ENCODE measurements at regions of chr14 and their contacts with region 1.

Region 1: DNA sequence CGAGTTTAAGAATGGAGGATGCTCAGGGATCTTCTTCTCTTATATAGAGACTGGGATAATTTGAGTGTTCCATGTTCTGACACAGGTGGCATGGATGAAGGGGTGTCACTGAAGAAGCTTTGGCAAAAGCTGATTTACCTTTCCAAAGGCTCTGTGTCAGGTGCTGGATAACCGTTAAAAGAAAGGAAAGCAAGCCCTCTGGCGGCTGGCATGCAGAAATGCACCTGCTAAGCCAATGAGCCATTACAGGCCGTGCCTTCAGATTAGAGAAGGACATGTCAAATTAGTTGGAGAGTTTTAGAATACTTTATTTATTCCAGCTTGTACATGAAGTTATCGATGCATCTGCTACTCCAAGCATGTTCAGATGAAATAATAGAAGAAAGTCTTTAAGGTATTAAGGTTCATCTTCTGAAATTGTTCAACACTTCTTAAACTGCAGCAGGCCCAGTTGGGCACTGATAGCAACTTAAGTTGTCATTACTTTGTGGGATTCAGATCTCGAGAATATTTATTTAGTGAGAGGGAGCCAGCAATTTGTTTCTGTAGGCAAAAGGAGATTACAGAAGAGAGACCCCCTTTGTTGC is 678.2 kb downstream of the NRXN3 start:
- DNase-seq: peak in 7 of 10 donors; percentile 10 to 54 (median 30)
- H3K4me3 ChIP-seq: no peak overlapping the region
- H3K27ac ChIP-seq: peak overlapping the region in 40 of 59 donors; percentile 8 to 78 (median 55)
- H3K27me3 ChIP-seq: no peaks in the 10 kb centered on the region
- CTCF ChIP-seq: peak; percentile 67 to 92 (median 82)

Region 2: DNA sequence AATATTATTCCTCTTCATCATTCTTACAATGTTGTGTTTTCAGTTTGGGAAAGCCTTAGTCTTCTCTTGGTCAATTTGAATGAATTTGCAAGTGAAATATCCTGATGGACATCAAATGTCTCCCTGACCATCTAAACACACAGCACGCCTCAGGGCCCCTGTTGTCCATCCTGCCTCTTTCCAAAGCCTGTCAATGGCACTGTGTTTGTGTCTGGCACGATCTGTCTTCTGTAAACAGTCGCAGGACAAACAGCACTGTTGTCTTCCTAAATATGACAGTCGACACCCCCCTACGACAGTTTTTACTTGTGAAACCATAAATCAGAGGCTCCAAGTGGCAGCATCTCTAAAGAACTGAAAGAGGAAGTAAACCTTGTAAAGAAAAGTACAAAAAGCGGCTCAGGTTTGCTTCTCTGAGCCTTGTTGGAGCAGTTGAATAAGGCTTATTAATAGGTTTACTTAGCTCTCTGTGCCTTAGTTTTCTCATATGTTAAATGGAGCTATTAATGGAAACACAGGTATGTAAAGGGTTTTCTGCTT is 392.4 kb before region 1 on chr14:
- intact Hi-C with region 1: no loop called
- DNase-seq: peak in 4 of 10 donors; percentile 40 to 54 (median 46)
- H3K4me3 ChIP-seq: peak overlapping the region in 7 of 59 donors; percentile 4 to 31 (median 11)
- H3K27ac ChIP-seq: peak overlapping the region in 52 of 59 donors; percentile 3 to 86 (median 64)
- H3K27me3 ChIP-seq: no peaks in the 10 kb centered on the region
- CTCF ChIP-seq: no peak

Region 3: DNA sequence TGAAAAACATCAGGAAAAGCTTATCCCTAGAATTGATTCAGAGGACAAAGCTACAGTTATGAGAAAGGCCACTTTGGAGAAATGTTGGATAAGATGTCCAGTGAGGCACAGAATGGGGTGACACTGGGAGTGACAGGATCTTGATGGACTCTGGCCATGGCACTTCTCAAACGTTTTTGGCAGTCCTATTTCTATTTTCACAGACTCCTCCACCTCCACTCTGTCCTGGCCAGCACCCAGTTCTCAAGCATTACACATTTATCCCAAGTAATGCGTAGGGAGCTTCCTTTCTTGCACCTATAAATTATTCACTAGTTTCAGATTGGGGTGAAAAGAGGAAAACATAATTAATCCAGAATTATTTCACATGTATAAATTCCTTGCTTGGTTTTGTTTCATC is 49.1 kb after region 1 on chr14:
- intact Hi-C with region 1: loop called in 1 of 2 experiments (anchors 5 kb)
- DNase-seq: peak in 1 of 10 donors; percentile 36
- H3K4me3 ChIP-seq: no peak overlapping the region
- H3K27ac ChIP-seq: peak overlapping the region in 14 of 59 donors; percentile 5 to 57 (median 30)
- H3K27me3 ChIP-seq: no peaks in the 10 kb centered on the region
- CTCF ChIP-seq: no peak